CD4-positive, alpha-beta memory T cell (primary cell): ENCODE measurements at regions of chr6 and their contacts with region 1.

Region 1: DNA sequence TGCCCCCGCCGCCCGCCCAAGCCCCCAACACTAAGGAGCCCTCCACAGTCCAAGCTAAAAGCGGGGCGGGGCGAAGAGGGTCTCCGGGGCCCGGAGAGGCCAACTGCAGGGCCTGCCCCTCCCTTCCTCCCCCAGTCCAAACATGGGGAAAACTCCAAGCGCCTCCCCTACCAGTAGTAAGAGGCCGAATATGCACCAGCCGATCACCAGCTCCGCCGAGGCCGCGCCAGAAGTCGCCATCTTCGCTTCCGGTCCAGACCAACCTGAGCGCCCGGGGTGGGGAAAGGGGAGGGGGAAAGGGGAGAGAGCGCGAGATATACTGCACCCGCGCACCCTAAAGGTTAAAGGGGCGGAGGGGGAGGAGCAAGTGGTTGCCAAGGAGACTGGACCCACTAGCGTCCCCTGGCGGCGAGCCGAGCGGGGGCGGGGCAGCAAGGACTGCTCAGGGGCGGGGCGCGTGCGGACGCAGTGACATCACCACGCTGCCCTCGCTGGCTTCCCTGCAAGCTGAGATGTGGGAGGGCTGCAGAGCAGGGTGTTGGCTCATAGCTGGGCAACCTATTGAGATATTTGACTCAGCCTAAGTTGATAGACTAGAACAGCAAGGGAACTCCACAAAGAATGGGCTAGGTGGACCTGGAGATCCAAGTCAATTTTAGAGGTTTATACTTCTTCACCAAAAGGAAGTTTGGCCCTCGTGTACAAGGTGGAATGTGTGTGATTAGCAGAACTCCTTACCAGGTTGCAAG is at the start of gene LMBRD1:
- DNase-seq: peak; percentile 98 to 100 (median 99)
- H3K4me3 ChIP-seq: peak within 1 kb of the TSS; percentile 24 to 75
- H3K4me3 Mint-ChIP-seq: peak within 1 kb of the TSS; percentile 89 to 100 (median 96)
- H3K27ac ChIP-seq: peak within 1 kb of the TSS; percentile 88
- H3K27ac Mint-ChIP-seq: peak within 1 kb of the TSS; percentile 93 to 100 (median 96)
- H3K4me1 ChIP-seq: peaks cover 38% of the 10 kb centered on the region
- H3K4me1 Mint-ChIP-seq: peaks cover 31 to 58% (median 47%) of the 10 kb centered on the region in 4 donors
- H3K27me3 ChIP-seq: no peaks in the 10 kb centered on the region
- H3K27me3 Mint-ChIP-seq: no peaks in the 10 kb centered on the region
- total RNA-seq, gene LMBRD1: 53.8 to 55.7 TPM

Region 2: GRCh38 chr6:69732640-69733039 is 64.2 kb before region 1 on chr6:
- CTCF ChIA-PET with region 1: interaction called, 4 read pairs
- POLR2A ChIA-PET with region 1: interaction called, 5 read pairs
- intact Hi-C with region 1: loop called (anchors 5 kb)
- DNase-seq: peak in 2 of 5 donors; percentile 5 to 12
- H3K4me3 ChIP-seq: no peak overlapping the region
- H3K4me3 Mint-ChIP-seq: no peak overlapping the region
- H3K27ac ChIP-seq: no peak overlapping the region
- H3K27ac Mint-ChIP-seq: no peak overlapping the region
- H3K4me1 ChIP-seq: no peaks in the 10 kb centered on the region
- H3K4me1 Mint-ChIP-seq: peaks cover 0 to 11% (median 7%) of the 10 kb centered on the region in 4 donors
- H3K27me3 ChIP-seq: no peaks in the 10 kb centered on the region
- H3K27me3 Mint-ChIP-seq: no peaks in the 10 kb centered on the region

Region 3: DNA sequence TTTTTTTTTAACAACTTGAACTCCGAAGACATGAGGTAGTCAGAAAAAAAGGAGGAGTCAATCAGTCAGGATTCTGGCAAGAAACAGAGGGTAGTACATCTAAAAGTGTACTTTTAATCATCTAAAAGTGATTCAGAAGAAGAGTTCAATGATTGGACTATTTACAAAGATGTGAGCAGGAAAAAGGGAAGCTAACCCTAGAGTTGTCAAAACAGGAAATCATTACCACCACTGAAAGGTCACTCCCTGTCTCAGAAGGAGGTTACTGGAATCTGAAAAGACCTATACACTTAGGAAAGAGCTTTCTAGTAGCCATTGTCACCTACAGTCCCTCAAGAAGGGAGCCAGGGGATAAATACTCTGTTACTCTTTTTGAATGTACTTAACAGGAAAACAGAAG is 16.7 kb after region 1 on chr6:
- CTCF ChIA-PET with region 1: interaction called, 93 read pairs
- POLR2A ChIA-PET with region 1: interaction called, 92 read pairs
- intact Hi-C with region 1: loop called (anchors 1 kb)
- DNase-seq: no peak
- H3K4me3 ChIP-seq: no peak overlapping the region
- H3K4me3 Mint-ChIP-seq: peak overlapping the region in 7 of 8 donors; percentile 30 to 83 (median 59)
- H3K27ac ChIP-seq: peak overlapping the region; percentile 47
- H3K27ac Mint-ChIP-seq: peak overlapping the region; percentile 84 to 99 (median 90)
- H3K4me1 ChIP-seq: peaks cover 55% of the 10 kb centered on the region
- H3K4me1 Mint-ChIP-seq: peaks cover 40 to 68% (median 55%) of the 10 kb centered on the region in 4 donors
- H3K27me3 ChIP-seq: no peaks in the 10 kb centered on the region
- H3K27me3 Mint-ChIP-seq: no peaks in the 10 kb centered on the region

Region 4: GRCh38 chr6:69835414-69836179 is 38.8 kb after region 1 on chr6:
- CTCF ChIA-PET with region 1: interaction called, 17 read pairs
- POLR2A ChIA-PET with region 1: interaction called, 7 read pairs
- intact Hi-C with region 1: no loop called
- DNase-seq: peak in 4 of 5 donors; percentile 26 to 39 (median 29)
- H3K4me3 ChIP-seq: no peak overlapping the region
- H3K4me3 Mint-ChIP-seq: peak overlapping the region in 1 of 8 donors; percentile 7
- H3K27ac ChIP-seq: no peak overlapping the region
- H3K27ac Mint-ChIP-seq: no peak overlapping the region
- H3K4me1 ChIP-seq: peaks cover 5% of the 10 kb centered on the region
- H3K4me1 Mint-ChIP-seq: peaks cover 0 to 7% (median 3%) of the 10 kb centered on the region in 4 donors
- H3K27me3 ChIP-seq: no peaks in the 10 kb centered on the region
- H3K27me3 Mint-ChIP-seq: peaks cover 9 to 11% of the 10 kb centered on the region in 2 donors

Region 5: GRCh38 chr6:70413114-70413991 is 616.5 kb after region 1 on chr6 and contains the start of gene FAM135A:
- CTCF ChIA-PET with region 1: no interaction called
- POLR2A ChIA-PET with region 1: no interaction called
- intact Hi-C with region 1: loop called (anchors 2 kb)
- DNase-seq: peak; percentile 90 to 96 (median 93)
- H3K4me3 ChIP-seq: peak within 1 kb of the TSS; percentile 59 to 62
- H3K4me3 Mint-ChIP-seq: peak within 1 kb of the TSS; percentile 93 to 97 (median 95)
- H3K27ac ChIP-seq: peak within 1 kb of the TSS; percentile 56
- H3K27ac Mint-ChIP-seq: peak within 1 kb of the TSS; percentile 90 to 96 (median 92)
- H3K4me1 ChIP-seq: peaks cover 17% of the 10 kb centered on the region
- H3K4me1 Mint-ChIP-seq: peaks cover 13 to 26% (median 20%) of the 10 kb centered on the region in 4 donors
- H3K27me3 ChIP-seq: no peaks in the 10 kb centered on the region
- H3K27me3 Mint-ChIP-seq: peaks cover 0 to 2% of the 10 kb centered on the region in 2 donors
- total RNA-seq, gene FAM135A: 11.3 to 14.5 TPM